PC-9 (cell line): ENCODE measurements at regions of chr9 and their contacts with region 1.

Region 1: GRCh38 chr9:83473488-83473971 is 64.7 kb downstream of the FRMD3 start:
- DNase-seq: peak; percentile 14 to 87
- H3K4me3 ChIP-seq: peak overlapping the region; percentile 24; the same call in 1 of the 2 replicates
- H3K27ac ChIP-seq: peak overlapping the region; percentile 88
- H3K4me1 ChIP-seq: peaks cover 50% of the 10 kb centered on the region
- H3K27me3 ChIP-seq: no peaks in the 10 kb centered on the region
- CTCF ChIP-seq: no peak

Region 2: GRCh38 chr9:83384214-83384613 is 89.3 kb before region 1 on chr9:
- CTCF ChIA-PET with region 1: no interaction called
- POLR2A ChIA-PET with region 1: no interaction called
- intact Hi-C with region 1: loop called (anchors 10 kb)
- DNase-seq: no peak
- H3K4me3 ChIP-seq: no peak overlapping the region
- H3K27ac ChIP-seq: no peak overlapping the region
- H3K4me1 ChIP-seq: no peaks in the 10 kb centered on the region
- H3K27me3 ChIP-seq: no peaks in the 10 kb centered on the region
- CTCF ChIP-seq: no peak

Region 3: GRCh38 chr9:83432104-83432639 is 41.4 kb before region 1 on chr9:
- CTCF ChIA-PET with region 1: interaction called, 3 read pairs
- POLR2A ChIA-PET with region 1: no interaction called
- intact Hi-C with region 1: loop called (anchors 1 kb)
- DNase-seq: peak; percentile 95
- H3K4me3 ChIP-seq: no peak overlapping the region
- H3K27ac ChIP-seq: peak overlapping the region; percentile 50
- H3K4me1 ChIP-seq: peaks cover 30% of the 10 kb centered on the region
- H3K27me3 ChIP-seq: no peaks in the 10 kb centered on the region
- CTCF ChIP-seq: no peak

Region 4: DNA sequence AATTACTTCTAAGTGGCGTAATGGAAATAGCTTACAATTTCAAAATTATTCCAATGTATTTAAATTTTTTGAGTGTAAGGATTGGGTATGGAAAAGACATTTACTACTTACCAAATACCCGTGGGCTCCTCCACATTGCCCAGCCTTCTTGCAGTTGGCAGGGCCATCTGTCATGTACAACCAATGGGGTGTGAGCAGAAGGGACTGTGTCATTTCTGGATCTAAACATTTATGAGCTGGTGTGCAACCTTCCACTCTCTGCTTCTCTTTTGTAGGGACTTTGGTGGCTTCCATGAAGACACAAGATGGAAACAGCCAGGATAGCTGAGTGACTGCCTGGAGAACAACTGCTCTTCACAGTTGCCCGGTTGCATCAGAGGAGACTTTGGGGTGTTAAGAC is 23.9 kb after region 1 on chr9:
- CTCF ChIA-PET with region 1: no interaction called
- POLR2A ChIA-PET with region 1: interaction called, 11 read pairs
- intact Hi-C with region 1: no loop called
- DNase-seq: no peak
- H3K4me3 ChIP-seq: no peak overlapping the region
- H3K27ac ChIP-seq: no peak overlapping the region
- H3K4me1 ChIP-seq: no peaks in the 10 kb centered on the region
- H3K27me3 ChIP-seq: no peaks in the 10 kb centered on the region
- CTCF ChIP-seq: no peak

Region 5: GRCh38 chr9:83538172-83538889 is 64.8 kb after region 1 on chr9 and contains the start of gene FRMD3:
- CTCF ChIA-PET with region 1: no interaction called
- POLR2A ChIA-PET with region 1: interaction called, 6 read pairs
- intact Hi-C with region 1: loop called (anchors 5 kb)
- DNase-seq: peak; percentile 72 to 88
- H3K4me3 ChIP-seq: peak within 1 kb of the TSS; percentile 69
- H3K27ac ChIP-seq: no peak within 1 kb of the TSS
- H3K4me1 ChIP-seq: peaks cover 7% of the 10 kb centered on the region; the same call in 1 of the 2 replicates
- H3K27me3 ChIP-seq: no peaks in the 10 kb centered on the region
- CTCF ChIP-seq: peak; percentile 80
- total RNA-seq, gene FRMD3: 1.4 and 1.9 TPM in 2 replicates

Region 6: GRCh38 chr9:83754383-83754977 is 280.9 kb after region 1 on chr9:
- CTCF ChIA-PET with region 1: no interaction called
- POLR2A ChIA-PET with region 1: no interaction called
- intact Hi-C with region 1: no loop called
- DNase-seq: no peak
- H3K4me3 ChIP-seq: no peak overlapping the region
- H3K27ac ChIP-seq: no peak overlapping the region
- H3K4me1 ChIP-seq: no peaks in the 10 kb centered on the region
- H3K27me3 ChIP-seq: no peaks in the 10 kb centered on the region
- CTCF ChIP-seq: no peak